ENCODE measurements at regions of chr9 and their contacts with region 1.

Region 1: DNA sequence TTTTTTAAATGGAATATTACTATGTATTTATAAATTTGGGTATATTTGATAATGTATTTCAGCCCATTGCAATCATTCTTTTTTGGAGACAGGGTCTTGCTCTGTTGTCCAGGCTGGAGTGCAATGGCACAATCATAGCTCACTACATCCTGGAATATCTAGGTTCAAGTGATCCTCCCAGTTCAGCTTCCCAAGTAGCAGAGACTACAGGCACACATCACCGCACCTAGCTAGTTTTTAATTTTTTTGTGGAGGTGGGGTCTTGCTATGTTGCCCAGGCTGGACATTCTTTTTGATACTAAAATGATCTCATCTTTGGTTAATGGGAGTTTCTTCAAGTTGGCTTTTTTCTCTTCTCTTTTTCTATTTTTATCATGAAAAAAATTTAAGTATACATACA is 91.3 kb downstream of the UNC13B start:
- DNase-seq: no peak
- H3K4me3 ChIP-seq: no peak overlapping the region
- H3K27ac ChIP-seq: no peak overlapping the region
- H3K4me1 ChIP-seq: no peaks in the 10 kb centered on the region
- H3K27me3 ChIP-seq: no peaks in the 10 kb centered on the region
- CTCF ChIP-seq: no peak

Region 2: DNA sequence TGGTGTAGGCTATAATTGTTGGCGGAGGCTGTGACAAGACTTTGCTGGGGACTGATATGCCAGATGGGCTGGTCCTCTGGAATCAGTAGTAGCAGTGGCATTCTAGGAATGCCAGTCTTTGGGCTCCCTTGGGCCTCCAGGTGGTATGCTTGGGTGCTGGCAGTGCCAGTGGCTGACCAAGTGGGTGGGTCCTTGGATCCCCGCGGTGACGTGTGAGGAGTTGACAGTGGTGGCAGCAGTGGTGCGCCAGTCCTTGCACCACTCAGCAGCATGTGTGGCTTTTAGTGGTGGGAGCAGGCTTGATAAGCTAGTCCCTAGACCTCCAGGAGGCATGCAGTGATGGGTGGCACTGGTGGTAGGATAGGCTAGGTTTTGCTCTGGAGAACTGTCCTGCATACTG is 27.4 kb before region 1 on chr9:
- CTCF ChIA-PET with region 1: no interaction called
- POLR2A ChIA-PET with region 1: no interaction called
- intact Hi-C with region 1: no loop called
- DNase-seq: no peak
- H3K4me3 ChIP-seq: no peak overlapping the region
- H3K27ac ChIP-seq: no peak overlapping the region
- H3K4me1 ChIP-seq: no peaks in the 10 kb centered on the region
- H3K27me3 ChIP-seq: no peaks in the 10 kb centered on the region
- CTCF ChIP-seq: no peak

Region 3: GRCh38 chr9:35237311-35237710 is 15.8 kb before region 1 on chr9:
- CTCF ChIA-PET with region 1: no interaction called
- POLR2A ChIA-PET with region 1: no interaction called
- intact Hi-C with region 1: no loop called
- DNase-seq: no peak
- H3K4me3 ChIP-seq: no peak overlapping the region
- H3K27ac ChIP-seq: no peak overlapping the region
- H3K4me1 ChIP-seq: no peaks in the 10 kb centered on the region
- H3K27me3 ChIP-seq: no peaks in the 10 kb centered on the region
- CTCF ChIP-seq: no peak

Region 4: DNA sequence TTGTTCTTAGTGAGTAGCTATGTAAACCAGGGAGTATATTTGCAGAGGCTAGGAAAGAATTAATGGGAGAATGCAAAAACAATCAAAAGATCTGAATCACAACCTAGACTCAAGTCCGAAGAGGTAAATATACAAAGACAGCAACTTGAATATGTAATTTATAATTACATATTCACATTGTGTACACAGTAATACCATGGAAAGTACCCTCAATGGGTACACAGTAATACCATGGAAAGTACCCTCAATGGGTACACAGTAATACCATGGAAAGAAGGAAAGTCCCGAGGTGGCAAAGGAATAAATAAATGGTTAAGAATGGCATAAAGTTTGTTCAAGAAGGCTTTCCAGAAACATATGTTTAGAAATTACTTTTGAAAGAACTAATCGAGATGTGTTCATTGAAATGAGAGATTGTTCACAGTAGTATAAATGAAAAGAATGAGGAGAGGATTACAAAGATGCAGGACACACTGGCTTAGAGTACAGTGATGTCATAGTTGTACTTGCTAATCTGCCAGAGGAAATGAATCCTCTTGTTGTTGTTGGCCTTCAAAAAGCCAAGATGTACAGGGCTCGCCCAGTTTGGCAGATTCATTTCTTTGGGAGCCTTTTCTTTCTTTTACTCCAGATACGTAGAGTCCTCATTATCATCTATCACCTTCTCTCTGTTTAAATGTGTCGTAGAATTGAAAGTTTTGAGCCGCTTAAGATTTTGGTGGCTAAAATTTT is 24.7 kb after region 1 on chr9:
- CTCF ChIA-PET with region 1: no interaction called
- POLR2A ChIA-PET with region 1: interaction called, 11 read pairs
- intact Hi-C with region 1: no loop called
- DNase-seq: no peak
- H3K4me3 ChIP-seq: no peak overlapping the region
- H3K27ac ChIP-seq: no peak overlapping the region
- H3K4me1 ChIP-seq: no peaks in the 10 kb centered on the region
- H3K27me3 ChIP-seq: no peaks in the 10 kb centered on the region
- CTCF ChIP-seq: no peak

Region 5: DNA sequence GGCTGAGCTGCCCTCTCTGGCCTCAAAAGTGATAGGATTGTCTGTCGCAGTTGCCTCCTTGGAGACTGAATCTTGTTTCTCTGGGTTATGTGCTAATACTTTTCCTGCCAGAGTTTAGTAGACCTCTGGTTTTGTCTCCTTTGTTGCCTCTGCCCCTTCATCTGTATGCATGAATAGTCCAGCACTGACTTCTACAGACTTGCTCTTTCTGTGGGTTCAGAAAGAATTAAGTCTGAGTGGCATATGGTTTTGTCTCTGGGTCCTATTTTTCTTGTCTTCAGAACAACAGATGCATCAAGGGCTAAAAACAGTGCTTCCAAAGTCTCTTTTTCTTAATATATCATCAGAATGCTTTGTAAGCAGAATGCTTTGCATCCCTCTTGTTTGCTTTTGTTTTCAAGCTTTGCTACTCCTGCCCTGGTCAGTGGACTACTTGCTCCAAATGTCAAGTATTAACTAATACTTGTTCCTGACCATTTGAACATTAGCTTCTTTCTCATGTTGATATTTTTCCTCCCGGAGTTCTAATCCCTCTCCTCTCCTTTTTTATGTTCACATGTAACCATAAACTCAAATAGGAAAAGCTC is 40.4 kb after region 1 on chr9:
- CTCF ChIA-PET with region 1: no interaction called
- POLR2A ChIA-PET with region 1: no interaction called
- intact Hi-C with region 1: no loop called
- DNase-seq: no peak
- H3K4me3 ChIP-seq: no peak overlapping the region
- H3K27ac ChIP-seq: no peak overlapping the region
- H3K4me1 ChIP-seq: no peaks in the 10 kb centered on the region
- H3K27me3 ChIP-seq: 0 out of 2 replicates have a peak, but pooled peaks cover 4% of the 10 kb centered on the region
- CTCF ChIP-seq: no peak